Prostate gland (tissue), 2 donors: ENCODE measurements at regions of chr6 and their contacts with region 1.

Region 1: GRCh38 chr6:43129434-43130194 is 41.5 kb upstream of the SRF start:
- DNase-seq: no peak
- H3K4me3 ChIP-seq: no peak overlapping the region
- H3K27ac ChIP-seq: no peak overlapping the region
- H3K4me1 ChIP-seq: peaks cover 4% of the 10 kb centered on the region
- H3K27me3 ChIP-seq: no peaks in the 10 kb centered on the region
- CTCF ChIP-seq: peak in 3 of 4 experiments; percentile 26 to 61 (median 50)
- POLR2A ChIP-seq: no peak

Region 2: GRCh38 chr6:43070028-43070632 is 59.5 kb before region 1 on chr6:
- intact Hi-C with region 1: loop called (anchors 2 kb)
- DNase-seq: no peak
- H3K4me3 ChIP-seq: no peak overlapping the region
- H3K27ac ChIP-seq: no peak overlapping the region
- H3K4me1 ChIP-seq: no peaks in the 10 kb centered on the region
- H3K27me3 ChIP-seq: no peaks in the 10 kb centered on the region
- CTCF ChIP-seq: peak; percentile 10 to 49 (median 38)
- POLR2A ChIP-seq: no peak